Sigmoid colon (tissue), 7 donors: ENCODE measurements at regions of chr3 and their contacts with region 1.

Region 1: DNA sequence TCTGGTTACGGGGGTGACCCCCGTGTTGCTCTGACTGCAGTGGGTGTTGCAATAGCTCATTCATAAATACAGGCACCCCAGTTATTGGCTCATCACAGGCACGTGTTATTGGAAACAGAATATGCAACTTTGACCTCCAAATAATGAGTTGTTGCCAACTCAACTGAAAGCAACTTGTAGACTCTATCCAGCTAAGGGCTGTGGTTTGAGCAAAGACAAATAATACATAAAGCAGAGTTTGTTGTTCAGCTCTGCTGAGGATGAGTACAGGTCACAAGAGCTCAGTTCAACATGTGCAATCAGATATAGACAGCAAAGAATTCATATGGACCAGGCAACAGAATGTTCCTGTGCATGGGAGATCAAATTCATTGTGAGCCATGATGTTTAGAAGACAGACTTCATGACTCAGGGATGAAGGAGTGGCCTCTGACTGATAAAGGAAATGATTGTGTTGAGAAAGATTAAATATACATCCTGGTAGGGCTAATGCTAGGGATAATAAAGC is 87.6 kb upstream of the LRIG1 start:
- DNase-seq: no peak
- H3K4me3 ChIP-seq: no peak overlapping the region
- H3K27ac ChIP-seq: no peak overlapping the region
- H3K4me1 ChIP-seq: peaks cover 0 to 5% (median 3%) of the 10 kb centered on the region in 4 donors
- H3K27me3 ChIP-seq: no peaks in the 10 kb centered on the region
- CTCF ChIP-seq: no peak
- EP300 ChIP-seq: no peak
- POLR2A ChIP-seq: no peak

Region 2: GRCh38 chr3:66507423-66508260 is 80.8 kb before region 1 on chr3:
- intact Hi-C with region 1: loop called (anchors 2 kb)
- DNase-seq: no peak
- H3K4me3 ChIP-seq: no peak overlapping the region
- H3K27ac ChIP-seq: peak overlapping the region in 3 of 4 donors; percentile 7 to 20 (median 8)
- H3K4me1 ChIP-seq: peaks cover 0 to 24% (median 19%) of the 10 kb centered on the region in 4 donors
- H3K27me3 ChIP-seq: no peaks in the 10 kb centered on the region
- CTCF ChIP-seq: no peak
- EP300 ChIP-seq: no peak
- POLR2A ChIP-seq: no peak

Region 3: DNA sequence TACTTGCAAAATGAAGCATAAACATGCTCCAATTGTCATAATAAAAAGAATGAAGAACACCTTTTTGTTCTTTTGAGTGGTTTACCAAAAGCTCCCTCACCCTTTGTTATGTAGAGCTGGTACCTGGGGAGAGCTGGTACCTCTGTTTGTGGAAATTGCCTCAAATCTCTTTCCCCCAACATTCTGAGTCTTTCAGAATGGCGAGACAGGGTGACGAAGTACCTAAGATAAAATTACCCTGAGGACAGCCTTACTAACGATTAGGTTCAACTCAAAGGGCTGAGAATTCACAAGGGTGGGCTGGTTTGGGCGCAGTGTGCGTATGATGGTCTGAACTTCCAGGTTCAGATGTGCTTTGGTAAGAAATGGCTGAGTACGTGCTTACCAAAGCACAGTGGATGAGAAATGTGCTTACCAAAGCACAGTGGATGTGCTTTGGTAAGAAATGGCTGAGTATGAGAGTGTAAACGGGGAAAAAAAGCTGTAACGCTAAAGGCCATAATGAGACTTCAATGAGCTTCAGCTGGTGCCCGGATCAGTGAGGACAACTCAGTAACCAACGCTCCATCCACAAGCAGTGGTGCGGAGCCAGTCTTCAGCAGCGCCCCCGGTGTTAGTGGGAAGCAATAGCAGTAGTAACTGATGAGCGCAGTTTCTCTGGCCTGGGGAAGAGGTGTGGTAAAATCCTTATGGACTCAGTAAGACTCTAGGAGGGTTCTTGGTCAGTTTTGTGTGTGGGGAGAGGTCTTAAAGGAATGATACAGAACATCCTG is 15.3 kb before region 1 on chr3:
- intact Hi-C with region 1: no loop called
- DNase-seq: no peak
- H3K4me3 ChIP-seq: no peak overlapping the region
- H3K27ac ChIP-seq: no peak overlapping the region
- H3K4me1 ChIP-seq: peaks cover 0 to 18% (median 14%) of the 10 kb centered on the region in 4 donors
- H3K27me3 ChIP-seq: no peaks in the 10 kb centered on the region
- CTCF ChIP-seq: no peak
- EP300 ChIP-seq: no peak
- POLR2A ChIP-seq: no peak